Dendritic cell treated with granulocyte-macrophage colony-stimulating factor and Interleukin-4, amounts not matched to agents 40 ng/mL and 50 ng/mL, for 4 days (primary cell): ENCODE measurements at regions of chr5 and their contacts with region 1.

Region 1: DNA sequence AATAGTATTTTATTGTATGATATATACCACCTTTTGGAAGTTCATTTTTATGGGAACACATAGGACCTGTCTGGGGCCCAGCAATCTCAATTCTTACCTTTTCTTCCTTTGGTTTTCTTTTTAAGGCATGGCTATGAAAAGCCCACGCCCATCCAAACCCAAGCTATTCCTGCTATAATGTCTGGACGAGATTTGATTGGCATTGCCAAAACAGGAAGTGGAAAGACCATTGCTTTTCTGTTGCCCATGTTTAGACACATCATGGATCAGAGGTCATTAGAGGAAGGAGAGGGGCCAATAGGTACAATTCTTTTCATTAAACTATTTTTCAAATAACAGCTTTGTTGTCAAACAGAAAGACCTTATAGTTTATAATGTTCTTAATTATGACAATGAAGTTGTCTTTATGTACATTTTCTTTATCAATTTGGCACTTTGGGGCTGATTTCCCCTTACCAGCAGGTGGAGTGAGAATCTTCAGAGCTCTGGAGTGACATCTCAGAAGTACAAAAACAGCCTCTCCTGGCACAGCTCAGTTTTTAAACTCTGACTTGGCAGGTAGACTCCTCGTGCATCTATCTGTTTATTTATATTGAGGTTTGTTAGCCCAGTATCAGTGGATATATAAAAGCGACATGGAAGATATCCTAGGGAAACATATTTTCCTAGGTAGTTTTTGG is 25.8 kb downstream of the DDX46 start:
- H3K4me3 Mint-ChIP-seq: no peak overlapping the region
- H3K27ac Mint-ChIP-seq: no peak overlapping the region
- H3K4me1 Mint-ChIP-seq: no peaks in the 10 kb centered on the region
- H3K27me3 Mint-ChIP-seq: no peaks in the 10 kb centered on the region

Region 2: DNA sequence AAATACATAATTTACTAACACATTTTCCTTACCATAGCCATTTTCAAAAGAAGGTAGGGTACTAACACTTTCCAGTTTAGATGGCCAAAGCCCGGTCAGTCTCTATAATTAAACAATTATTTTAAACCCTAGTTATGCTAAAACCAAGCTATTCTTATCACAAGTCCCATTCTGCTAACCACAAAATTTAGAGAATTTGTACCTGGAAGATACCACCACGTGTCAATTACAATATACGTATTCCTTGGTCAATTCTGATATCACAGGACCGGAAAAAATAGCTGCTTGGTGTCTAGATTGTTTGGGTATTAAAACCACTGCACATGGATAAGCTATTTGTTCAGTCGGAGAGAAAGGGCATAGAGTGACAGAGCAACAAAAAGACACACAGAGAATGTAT is 588.7 kb before region 1 on chr5:
- intact Hi-C with region 1: no loop called
- H3K4me3 Mint-ChIP-seq: no peak overlapping the region
- H3K27ac Mint-ChIP-seq: no peak overlapping the region
- H3K4me1 Mint-ChIP-seq: no peaks in the 10 kb centered on the region
- H3K27me3 Mint-ChIP-seq: no peaks in the 10 kb centered on the region

Region 3: DNA sequence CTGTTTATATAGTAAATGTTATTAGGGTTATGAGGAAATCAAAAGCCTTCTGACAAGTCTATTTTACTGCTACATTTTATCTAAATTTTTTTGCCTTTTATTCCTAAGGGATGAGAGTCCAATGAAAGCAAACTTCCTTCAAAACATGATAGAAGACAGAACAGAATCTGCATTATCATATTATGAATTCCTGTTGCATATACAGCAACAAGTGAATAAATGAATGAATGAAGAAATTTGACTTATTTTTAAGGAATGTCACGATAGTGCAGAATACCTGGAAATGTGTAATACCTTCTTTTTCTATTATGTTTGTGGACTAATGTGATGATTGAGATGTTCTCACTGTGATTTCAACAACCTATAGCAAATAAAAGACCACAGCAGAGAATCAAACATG is 59.5 kb before region 1 on chr5:
- intact Hi-C with region 1: loop called (anchors 10 kb)
- H3K4me3 Mint-ChIP-seq: no peak overlapping the region
- H3K27ac Mint-ChIP-seq: no peak overlapping the region
- H3K4me1 Mint-ChIP-seq: no peaks in the 10 kb centered on the region
- H3K27me3 Mint-ChIP-seq: no peaks in the 10 kb centered on the region

Region 4: DNA sequence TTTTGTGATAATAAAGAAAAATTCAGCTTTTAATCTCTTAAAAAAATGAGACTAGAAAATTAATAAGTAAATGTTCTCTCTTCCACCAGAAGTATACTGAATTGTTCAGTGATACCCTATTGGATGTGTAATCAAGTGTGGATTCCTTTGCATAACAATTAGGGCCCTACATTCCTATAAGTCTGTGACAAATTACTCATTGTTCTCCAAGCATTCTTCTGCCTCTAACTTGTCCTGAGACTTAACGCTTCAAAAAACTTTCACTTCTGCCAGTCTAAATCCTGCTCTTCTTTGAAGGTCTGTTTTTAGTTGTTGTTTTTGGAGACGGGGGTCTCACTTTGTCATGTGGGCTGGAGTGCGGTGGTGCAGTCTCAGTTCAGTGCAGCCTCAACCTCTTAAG is 35.0 kb before region 1 on chr5:
- intact Hi-C with region 1: no loop called
- H3K4me3 Mint-ChIP-seq: no peak overlapping the region
- H3K27ac Mint-ChIP-seq: no peak overlapping the region
- H3K4me1 Mint-ChIP-seq: no peaks in the 10 kb centered on the region
- H3K27me3 Mint-ChIP-seq: no peaks in the 10 kb centered on the region

Region 5: DNA sequence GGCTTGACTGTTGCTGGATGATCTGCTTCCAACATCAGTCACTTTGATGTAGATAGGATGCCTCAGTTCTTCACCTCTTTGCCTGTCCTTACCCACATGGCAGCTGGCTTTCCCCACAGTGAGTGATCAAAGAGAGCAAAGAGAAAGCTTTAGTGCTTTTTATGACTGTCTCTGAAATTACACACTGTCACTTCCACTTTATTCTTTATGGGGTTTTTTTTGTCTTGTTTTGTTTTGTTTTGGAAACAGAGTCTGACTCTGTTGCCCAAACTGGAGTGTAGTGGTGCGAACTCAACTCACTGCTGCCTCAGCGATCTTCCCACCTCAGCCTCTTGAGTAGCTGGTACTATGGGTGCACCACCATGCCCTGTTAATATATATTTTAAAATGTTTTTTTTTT is 29.0 kb after region 1 on chr5:
- intact Hi-C with region 1: no loop called
- H3K4me3 Mint-ChIP-seq: no peak overlapping the region
- H3K27ac Mint-ChIP-seq: no peak overlapping the region
- H3K4me1 Mint-ChIP-seq: peaks cover 9% of the 10 kb centered on the region
- H3K27me3 Mint-ChIP-seq: no peaks in the 10 kb centered on the region